Calu3 (cell line): ENCODE measurements at regions of chr2 and their contacts with region 1.

Region 1: GRCh38 chr2:66429071-66429477 is 5.9 kb upstream of the MEIS1 start:
- DNase-seq: peak; percentile 34
- H3K4me3 Mint-ChIP-seq: no peak overlapping the region
- H3K27ac Mint-ChIP-seq: no peak overlapping the region
- H3K4me1 Mint-ChIP-seq: peaks cover 26% of the 10 kb centered on the region
- H3K27me3 Mint-ChIP-seq: no peaks in the 10 kb centered on the region
- CTCF ChIP-seq: peak; percentile 65

Region 2: DNA sequence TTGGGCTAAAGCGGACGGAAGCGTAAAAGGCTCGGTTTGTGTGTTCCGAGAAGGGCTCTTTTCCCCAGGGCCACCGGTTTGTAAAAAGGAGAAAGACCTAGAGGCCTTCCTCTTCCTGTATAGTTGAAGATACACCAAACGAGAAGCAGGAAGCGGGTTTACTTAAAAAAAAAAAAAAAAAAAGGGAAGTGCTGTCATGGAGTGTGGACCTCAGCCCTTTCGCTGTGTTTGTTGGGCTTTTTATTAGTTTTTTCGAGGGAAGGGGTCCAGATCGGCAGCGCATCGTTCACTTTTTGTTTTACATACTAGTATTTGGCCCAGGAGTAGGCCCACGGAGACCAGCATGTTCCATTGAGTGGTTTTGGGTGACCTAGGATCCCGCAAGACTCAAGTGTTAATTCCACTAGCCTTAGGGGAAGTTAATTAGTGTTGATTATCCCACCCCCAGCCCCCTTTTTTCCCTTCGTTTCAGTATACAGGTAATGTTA is 1200.8 kb before region 1 on chr2:
- CTCF ChIA-PET with region 1: no interaction called
- intact Hi-C with region 1: no loop called
- DNase-seq: peak; percentile 5
- H3K4me3 Mint-ChIP-seq: peak overlapping the region; percentile 93
- H3K27ac Mint-ChIP-seq: peak overlapping the region; percentile 97
- H3K4me1 Mint-ChIP-seq: no peaks in the 10 kb centered on the region
- H3K27me3 Mint-ChIP-seq: no peaks in the 10 kb centered on the region
- CTCF ChIP-seq: no peak

Region 3: DNA sequence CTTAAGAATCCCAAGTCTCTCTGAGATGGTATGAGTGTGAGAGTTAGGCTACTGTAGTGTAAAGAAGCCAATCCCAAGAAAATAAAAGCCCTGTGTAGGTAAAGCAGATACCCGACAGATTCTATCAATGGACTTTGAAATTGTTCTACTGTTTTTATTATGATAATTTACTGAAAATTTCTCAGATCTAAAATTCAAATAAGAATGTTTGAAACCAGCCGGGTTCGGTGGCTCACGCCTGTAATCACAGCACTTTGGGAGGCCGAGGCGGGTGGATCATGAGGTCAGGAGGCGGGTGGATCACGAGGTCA is 788.3 kb before region 1 on chr2:
- CTCF ChIA-PET with region 1: interaction called, 5 read pairs
- intact Hi-C with region 1: loop called (anchors 5 kb)
- DNase-seq: no peak
- H3K4me3 Mint-ChIP-seq: peak overlapping the region; percentile 74
- H3K27ac Mint-ChIP-seq: peak overlapping the region; percentile 41
- H3K4me1 Mint-ChIP-seq: no peaks in the 10 kb centered on the region
- H3K27me3 Mint-ChIP-seq: peaks cover 12% of the 10 kb centered on the region
- CTCF ChIP-seq: no peak

Region 4: DNA sequence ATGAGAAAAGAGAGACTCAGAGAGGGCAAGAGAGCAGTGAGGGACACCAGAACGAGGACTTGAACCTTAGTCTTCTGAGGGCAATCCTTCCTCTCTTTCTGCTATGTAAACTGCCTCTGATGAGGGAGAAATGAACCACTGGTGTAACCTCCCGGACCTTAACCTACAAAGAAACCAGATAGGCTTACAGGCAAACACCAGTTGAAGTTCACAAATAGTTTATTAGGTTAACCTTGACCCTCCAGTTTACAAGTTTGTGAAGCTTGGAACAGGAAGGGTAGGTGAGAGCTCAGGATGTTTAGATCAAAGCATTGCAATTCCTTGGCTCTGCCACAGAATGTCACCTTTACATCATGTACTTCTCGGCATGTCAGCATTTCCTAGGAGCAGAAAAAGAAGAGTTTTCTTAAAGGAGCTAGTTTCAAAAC is 510.3 kb before region 1 on chr2:
- CTCF ChIA-PET with region 1: interaction called, 3 read pairs
- intact Hi-C with region 1: loop called (anchors 5 kb)
- DNase-seq: no peak
- H3K4me3 Mint-ChIP-seq: no peak overlapping the region
- H3K27ac Mint-ChIP-seq: no peak overlapping the region
- H3K4me1 Mint-ChIP-seq: no peaks in the 10 kb centered on the region
- H3K27me3 Mint-ChIP-seq: peaks cover 40% of the 10 kb centered on the region
- CTCF ChIP-seq: no peak

Region 5: DNA sequence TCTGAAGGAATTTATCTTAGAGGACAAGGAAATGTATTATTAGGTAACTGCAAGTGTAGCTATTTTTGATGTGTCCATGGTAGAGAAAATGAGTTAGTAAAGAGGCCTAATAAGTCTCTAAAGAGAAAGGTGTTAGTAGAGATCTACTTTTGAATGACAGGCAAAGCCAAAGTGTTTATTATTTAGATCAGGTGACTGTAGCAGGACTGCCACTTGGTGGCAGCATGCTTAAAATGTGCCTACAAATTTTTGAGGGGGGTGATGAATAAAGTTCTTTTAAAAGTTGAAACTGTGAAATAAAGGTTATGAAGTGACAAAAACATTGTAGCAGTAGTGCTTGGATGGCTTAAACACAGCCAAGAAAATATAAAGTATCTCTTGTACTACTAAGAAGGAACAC is 415.6 kb before region 1 on chr2:
- CTCF ChIA-PET with region 1: no interaction called
- intact Hi-C with region 1: loop called (anchors 5 kb)
- DNase-seq: peak; percentile 6
- H3K4me3 Mint-ChIP-seq: no peak overlapping the region
- H3K27ac Mint-ChIP-seq: no peak overlapping the region
- H3K4me1 Mint-ChIP-seq: no peaks in the 10 kb centered on the region
- H3K27me3 Mint-ChIP-seq: no peaks in the 10 kb centered on the region
- CTCF ChIP-seq: no peak

Region 6: GRCh38 chr2:66481100-66481549 is 52.1 kb after region 1 on chr2:
- CTCF ChIA-PET with region 1: no interaction called
- intact Hi-C with region 1: no loop called
- DNase-seq: peak; percentile 19
- H3K4me3 Mint-ChIP-seq: no peak overlapping the region
- H3K27ac Mint-ChIP-seq: no peak overlapping the region
- H3K4me1 Mint-ChIP-seq: no peaks in the 10 kb centered on the region
- H3K27me3 Mint-ChIP-seq: no peaks in the 10 kb centered on the region
- CTCF ChIP-seq: no peak

Region 7: GRCh38 chr2:68031542-68032160 is 1602.6 kb after region 1 on chr2:
- CTCF ChIA-PET with region 1: interaction called, 3 read pairs
- intact Hi-C with region 1: loop called (anchors 5 kb)
- DNase-seq: peak; percentile 29
- H3K4me3 Mint-ChIP-seq: no peak overlapping the region
- H3K27ac Mint-ChIP-seq: no peak overlapping the region
- H3K4me1 Mint-ChIP-seq: no peaks in the 10 kb centered on the region
- H3K27me3 Mint-ChIP-seq: no peaks in the 10 kb centered on the region
- CTCF ChIP-seq: peak; percentile 25